PC-9 (cell line): ENCODE measurements at regions of chr17 and their contacts with region 1.

Region 1: GRCh38 chr17:77254951-77255825 is 114.4 kb downstream of the SEC14L1 start:
- DNase-seq: peak; percentile 95 to 97
- H3K4me3 ChIP-seq: peak overlapping the region; percentile 92; the same call in 1 of the 2 replicates
- H3K27ac ChIP-seq: peak overlapping the region; percentile 100
- H3K4me1 ChIP-seq: peaks cover 23% of the 10 kb centered on the region
- H3K27me3 ChIP-seq: no peaks in the 10 kb centered on the region
- CTCF ChIP-seq: 0 out of 2 replicates have a peak, but pooled peaks have one; percentile 3

Region 2: DNA sequence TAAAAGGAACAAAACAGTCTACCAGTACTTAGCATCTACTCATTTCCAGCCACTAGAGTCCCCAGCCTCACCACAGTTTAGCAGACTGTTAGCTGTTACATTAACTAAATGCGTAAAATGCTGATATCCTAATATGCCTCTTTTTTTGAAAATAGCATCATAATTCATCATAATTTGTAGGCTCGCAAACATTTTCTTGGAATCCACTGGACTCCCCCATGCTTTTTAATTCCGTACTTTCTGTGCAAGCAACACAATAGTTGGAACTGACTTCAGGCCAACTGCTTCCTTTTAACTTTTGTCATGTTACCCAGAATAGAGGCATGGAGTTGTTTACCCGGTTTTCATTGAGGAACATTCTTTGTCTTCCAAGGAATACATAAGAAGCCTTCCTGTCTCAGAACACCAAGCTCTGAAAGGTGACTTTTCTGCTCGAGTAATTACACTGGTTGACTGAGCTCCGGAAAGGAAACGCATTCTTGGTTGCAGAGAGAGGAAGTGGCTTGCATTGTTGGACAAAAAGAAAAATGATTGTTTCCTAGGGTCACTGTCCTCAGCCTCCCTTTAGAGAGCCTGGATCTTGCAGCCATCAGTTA is 145.3 kb before region 1 on chr17:
- CTCF ChIA-PET with region 1: interaction called, 19 read pairs
- POLR2A ChIA-PET with region 1: interaction called, 5 read pairs
- intact Hi-C with region 1: no loop called
- DNase-seq: peak; percentile 27 to 46
- H3K4me3 ChIP-seq: no peak overlapping the region
- H3K27ac ChIP-seq: no peak overlapping the region
- H3K4me1 ChIP-seq: no peaks in the 10 kb centered on the region
- H3K27me3 ChIP-seq: no peaks in the 10 kb centered on the region
- CTCF ChIP-seq: no peak

Region 3: DNA sequence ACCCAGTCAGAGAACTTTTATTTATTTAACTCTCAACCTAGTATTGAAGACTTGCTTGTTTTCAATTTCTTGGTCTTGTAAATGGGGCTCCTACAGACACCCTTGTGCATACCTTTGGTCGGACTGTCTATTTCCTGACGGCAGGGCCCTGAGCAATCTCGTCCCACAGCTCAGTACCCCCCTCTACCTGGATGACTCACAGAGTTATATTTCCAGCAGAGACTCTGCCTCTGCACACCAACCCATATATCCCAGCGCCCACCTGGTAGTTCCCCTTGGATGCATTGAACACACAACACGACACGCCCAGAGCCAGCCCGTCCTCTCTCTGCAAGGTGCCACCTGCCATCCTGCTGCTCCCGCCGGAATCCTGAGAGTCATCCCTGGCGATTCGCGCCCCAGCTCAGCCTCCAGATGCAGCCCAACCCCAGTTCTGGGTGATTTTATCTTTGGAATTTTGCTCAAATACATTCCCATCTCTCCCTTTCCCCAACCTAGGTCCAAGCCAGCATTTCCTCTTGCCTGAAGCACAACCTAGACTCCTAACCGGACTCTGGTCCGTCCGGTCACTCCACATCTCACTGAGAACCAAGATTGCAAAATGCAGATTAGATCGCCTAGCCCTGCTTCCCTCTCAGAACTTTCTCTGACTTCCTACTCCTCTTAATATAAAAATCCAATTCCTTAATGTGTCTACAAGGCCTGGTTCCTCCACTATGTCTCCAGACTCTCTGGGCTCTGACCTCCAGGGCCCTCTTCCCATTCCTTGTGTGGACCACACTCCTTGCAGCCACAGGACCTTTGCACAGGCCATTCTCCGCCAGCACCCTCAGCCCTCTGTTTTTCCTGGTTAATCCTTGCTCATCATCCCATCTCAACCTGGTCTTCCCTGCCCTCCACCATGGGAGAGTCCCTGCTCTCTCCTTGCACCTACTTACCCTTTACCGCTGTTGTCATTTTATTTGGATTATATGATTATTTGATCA is 14.8 kb after region 1 on chr17:
- CTCF ChIA-PET with region 1: interaction called, 3 read pairs
- POLR2A ChIA-PET with region 1: interaction called, 12 read pairs
- intact Hi-C with region 1: loop called (anchors 1 kb)
- DNase-seq: peak; percentile 76 to 85
- H3K4me3 ChIP-seq: peak overlapping the region; percentile 27; the same call in 1 of the 2 replicates
- H3K27ac ChIP-seq: peak overlapping the region; percentile 67
- H3K4me1 ChIP-seq: peaks cover 26% of the 10 kb centered on the region
- H3K27me3 ChIP-seq: no peaks in the 10 kb centered on the region
- CTCF ChIP-seq: no peak

Region 4: GRCh38 chr17:77287432-77288071 is 32.4 kb after region 1 on chr17:
- CTCF ChIA-PET with region 1: interaction called, 3 read pairs
- POLR2A ChIA-PET with region 1: interaction called, 28 read pairs
- intact Hi-C with region 1: loop called (anchors 1 kb)
- DNase-seq: peak; percentile 81 to 86
- H3K4me3 ChIP-seq: peak overlapping the region; percentile 72
- H3K27ac ChIP-seq: peak overlapping the region; percentile 99
- H3K4me1 ChIP-seq: peaks cover 70% of the 10 kb centered on the region
- H3K27me3 ChIP-seq: no peaks in the 10 kb centered on the region
- CTCF ChIP-seq: no peak

Region 5: DNA sequence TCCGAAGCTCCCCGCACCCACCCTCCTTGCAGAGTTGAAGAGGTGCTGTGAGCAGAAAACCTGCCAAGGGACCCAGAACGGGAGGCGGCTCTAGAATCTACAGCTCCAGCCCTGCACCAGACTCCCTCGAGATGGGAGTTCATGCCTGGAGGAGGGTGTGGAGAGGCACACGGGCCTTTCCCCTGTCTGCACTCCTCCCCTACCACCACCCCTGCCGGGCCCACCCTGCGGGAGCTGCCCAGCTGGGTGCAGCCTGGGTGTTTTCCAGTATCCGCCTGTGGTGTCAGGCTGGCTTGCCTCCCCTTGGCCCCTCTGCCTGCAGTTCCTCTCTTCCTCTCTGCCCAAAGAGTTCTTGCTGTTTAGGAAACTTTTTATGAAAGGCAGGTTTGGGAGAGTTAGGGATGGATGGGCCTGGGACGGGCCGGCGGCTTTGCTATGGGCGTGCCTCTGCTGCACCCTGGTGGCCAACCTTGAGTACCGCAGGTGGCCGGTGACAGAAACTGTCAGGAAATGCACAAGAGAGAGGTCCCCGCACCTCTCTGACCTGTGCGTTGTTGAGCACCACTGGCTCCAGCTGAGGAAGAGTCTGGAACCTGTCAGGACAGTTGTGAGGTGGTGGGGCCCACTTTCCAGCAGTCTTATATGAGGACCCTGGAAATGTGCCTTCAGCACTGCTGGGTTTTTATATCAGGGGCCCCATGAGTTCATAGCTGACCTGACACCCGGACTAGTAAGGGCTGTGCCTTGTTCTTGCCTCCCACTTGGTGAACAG is 239.7 kb after region 1 on chr17:
- CTCF ChIA-PET with region 1: no interaction called
- POLR2A ChIA-PET with region 1: interaction called, 5 read pairs
- intact Hi-C with region 1: loop called (anchors 1 kb)
- DNase-seq: peak; percentile 44 to 72
- H3K4me3 ChIP-seq: no peak overlapping the region
- H3K27ac ChIP-seq: no peak overlapping the region
- H3K4me1 ChIP-seq: no peaks in the 10 kb centered on the region
- H3K27me3 ChIP-seq: no peaks in the 10 kb centered on the region
- CTCF ChIP-seq: peak; percentile 94